ENCODE measurements at regions of chr15 and their contacts with region 1.

Region 1: GRCh38 chr15:38631126-38632075 is 66.8 kb upstream of the RASGRP1 start:
- DNase-seq: no peak
- ATAC-seq: peak; percentile 77
- H3K4me3 ChIP-seq: no peak overlapping the region
- H3K27ac ChIP-seq: no peak overlapping the region; the same call in 1 of the 2 replicates
- H3K4me1 ChIP-seq: no peaks in the 10 kb centered on the region
- H3K27me3 ChIP-seq: no peaks in the 10 kb centered on the region
- CTCF ChIP-seq: no peak
- EP300 ChIP-seq: no peak; a peak in 2 of 4 replicates
- POLR2A ChIP-seq: no peak
- RAD21 ChIP-seq: no peak

Region 2: DNA sequence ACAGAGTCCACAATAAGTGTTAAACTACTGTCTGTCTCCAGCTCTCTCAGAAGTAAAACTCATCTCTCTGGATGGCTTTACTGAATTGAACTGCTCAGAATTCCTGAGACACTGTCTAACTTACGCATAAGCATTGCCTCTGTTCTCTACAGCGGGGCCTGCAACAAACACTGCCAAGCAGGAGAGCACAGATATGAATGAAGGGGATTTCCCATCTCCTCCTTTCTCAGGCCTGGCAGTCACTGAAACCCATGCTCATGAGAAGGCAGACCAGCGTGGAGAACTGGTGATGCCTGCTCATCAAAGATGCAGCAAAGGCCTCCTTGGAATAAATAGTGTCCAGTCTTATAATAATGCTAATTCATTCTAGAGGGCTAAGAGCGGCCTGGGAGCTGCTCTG is 77.0 kb before region 1 on chr15:
- CTCF ChIA-PET with region 1: interaction called, 116 read pairs
- POLR2A ChIA-PET with region 1: interaction called, 22 read pairs
- RAD21 ChIA-PET with region 1: interaction called, 331 read pairs
- SMC1A ChIA-PET with region 1: interaction called, 194 read pairs
- in situ Hi-C with region 1: no loop called
- intact Hi-C with region 1: no loop called
- DNase-seq: no peak
- ATAC-seq: peak; percentile 80
- H3K4me3 ChIP-seq: no peak overlapping the region
- H3K27ac ChIP-seq: peak overlapping the region; percentile 59; the same call in 1 of the 2 replicates
- H3K4me1 ChIP-seq: peaks cover 45% of the 10 kb centered on the region
- H3K27me3 ChIP-seq: no peaks in the 10 kb centered on the region
- CTCF ChIP-seq: no peak
- EP300 ChIP-seq: no peak
- POLR2A ChIP-seq: no peak
- RAD21 ChIP-seq: no peak

Region 3: GRCh38 chr15:38610748-38611147 is 20.7 kb before region 1 on chr15:
- CTCF ChIA-PET with region 1: interaction called, 3 read pairs
- POLR2A ChIA-PET with region 1: interaction called, 3 read pairs
- RAD21 ChIA-PET with region 1: interaction called, 15 read pairs
- SMC1A ChIA-PET with region 1: interaction called, 1,803 read pairs
- in situ Hi-C with region 1: no loop called
- intact Hi-C with region 1: no loop called
- DNase-seq: no peak
- ATAC-seq: peak; percentile 29
- H3K4me3 ChIP-seq: no peak overlapping the region
- H3K27ac ChIP-seq: no peak overlapping the region
- H3K4me1 ChIP-seq: no peaks in the 10 kb centered on the region
- H3K27me3 ChIP-seq: no peaks in the 10 kb centered on the region
- CTCF ChIP-seq: no peak
- EP300 ChIP-seq: no peak
- POLR2A ChIP-seq: no peak
- RAD21 ChIP-seq: no peak

Region 4: DNA sequence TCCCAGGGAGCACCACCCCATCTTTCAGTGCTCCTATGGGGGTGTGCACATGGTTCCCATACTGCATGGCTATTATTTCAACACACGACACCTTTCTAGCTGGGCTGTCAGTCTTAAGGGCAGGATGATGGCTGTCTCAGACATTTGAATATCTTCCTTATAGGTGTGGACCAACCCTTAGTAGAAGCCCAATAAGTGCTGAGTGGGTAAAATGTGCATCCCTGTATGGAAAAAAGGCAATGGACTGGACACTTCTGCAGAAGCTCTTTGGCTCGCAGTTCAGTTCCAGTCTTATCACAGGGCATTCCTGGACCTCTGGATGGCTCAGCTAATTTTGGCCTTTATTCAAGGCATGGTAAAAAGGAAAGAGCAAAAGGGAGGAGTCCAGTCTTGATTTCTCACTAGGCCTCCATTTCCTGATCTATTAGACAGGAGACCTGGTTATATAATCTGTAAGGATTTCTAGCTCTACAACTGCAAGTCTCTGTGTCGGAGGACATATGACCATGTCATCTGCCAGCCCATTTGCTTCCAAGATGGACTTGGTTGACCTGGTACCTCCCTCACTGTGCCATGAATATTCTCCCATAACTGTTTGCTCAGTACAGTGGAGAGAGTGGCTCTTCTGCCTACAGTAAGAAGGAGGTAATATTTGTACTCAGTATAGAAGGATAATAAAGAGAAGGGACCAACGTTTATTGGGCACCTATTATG is 13.0 kb before region 1 on chr15:
- CTCF ChIA-PET with region 1: interaction called, 24 read pairs
- POLR2A ChIA-PET with region 1: interaction called, 30 read pairs
- RAD21 ChIA-PET with region 1: interaction called, 55 read pairs
- SMC1A ChIA-PET with region 1: interaction called, 1,803 read pairs
- in situ Hi-C with region 1: no loop called
- intact Hi-C with region 1: no loop called
- DNase-seq: no peak
- ATAC-seq: no peak
- H3K4me3 ChIP-seq: no peak overlapping the region
- H3K27ac ChIP-seq: no peak overlapping the region
- H3K4me1 ChIP-seq: no peaks in the 10 kb centered on the region
- H3K27me3 ChIP-seq: no peaks in the 10 kb centered on the region
- CTCF ChIP-seq: no peak
- EP300 ChIP-seq: no peak
- POLR2A ChIP-seq: no peak
- RAD21 ChIP-seq: no peak

Region 5: DNA sequence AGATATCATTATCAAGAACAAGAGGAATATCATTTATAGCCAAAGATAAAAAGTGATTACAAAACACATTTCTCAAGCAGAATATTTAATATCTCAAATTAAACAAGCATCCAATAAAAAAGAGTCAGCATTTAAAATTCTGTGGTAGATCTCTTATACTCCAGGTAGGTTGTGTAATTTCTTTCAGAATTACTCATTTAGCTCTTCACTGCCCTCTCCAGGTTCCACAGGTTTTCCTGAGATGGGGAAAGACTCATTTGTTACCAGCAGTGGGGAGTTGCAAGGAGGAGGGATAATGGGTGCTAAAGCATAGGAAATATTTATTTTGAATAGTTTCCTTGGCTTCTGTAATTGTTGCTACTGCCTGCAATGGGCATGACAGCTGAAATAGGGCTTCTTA is 16.3 kb after region 1 on chr15:
- CTCF ChIA-PET with region 1: interaction called, 188 read pairs
- POLR2A ChIA-PET with region 1: interaction called, 310 read pairs
- RAD21 ChIA-PET with region 1: interaction called, 737 read pairs
- SMC1A ChIA-PET with region 1: interaction called, 1,803 read pairs
- in situ Hi-C with region 1: no loop called
- intact Hi-C with region 1: no loop called
- DNase-seq: no peak
- ATAC-seq: no peak
- H3K4me3 ChIP-seq: no peak overlapping the region
- H3K27ac ChIP-seq: no peak overlapping the region
- H3K4me1 ChIP-seq: peaks cover 27% of the 10 kb centered on the region
- H3K27me3 ChIP-seq: no peaks in the 10 kb centered on the region
- CTCF ChIP-seq: peak in 2 of 3 experiments; percentile 5 to 17; a peak in 1 of 6 replicates
- EP300 ChIP-seq: no peak
- POLR2A ChIP-seq: no peak
- RAD21 ChIP-seq: peak; percentile 23; the same call in 1 of the 2 replicates

Region 6: DNA sequence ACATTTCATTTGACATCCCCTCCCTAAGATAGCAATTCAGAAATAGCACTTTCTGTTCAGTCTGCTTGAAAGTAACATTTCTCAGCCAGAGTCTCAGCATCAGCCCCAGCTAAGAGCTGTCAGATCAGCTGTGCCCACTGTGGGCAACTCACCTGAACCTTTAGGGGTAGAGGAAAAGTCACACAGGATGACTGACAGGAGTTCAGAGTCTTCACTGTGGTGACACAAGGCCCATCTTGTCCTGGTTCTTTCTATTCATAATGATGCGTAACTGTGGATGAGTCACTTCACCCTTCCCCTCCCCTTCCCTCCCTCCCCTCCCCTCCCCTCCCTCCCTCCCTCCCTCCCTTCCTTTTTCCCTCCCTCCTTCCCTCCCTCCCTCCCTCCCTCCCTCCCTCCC is 29.3 kb after region 1 on chr15:
- CTCF ChIA-PET with region 1: interaction called, 20 read pairs
- POLR2A ChIA-PET with region 1: interaction called, 310 read pairs
- RAD21 ChIA-PET with region 1: interaction called, 737 read pairs
- SMC1A ChIA-PET with region 1: interaction called, 1,803 read pairs
- in situ Hi-C with region 1: no loop called
- intact Hi-C with region 1: no loop called
- DNase-seq: no peak
- ATAC-seq: peak; percentile 67
- H3K4me3 ChIP-seq: no peak overlapping the region
- H3K27ac ChIP-seq: no peak overlapping the region
- H3K4me1 ChIP-seq: no peaks in the 10 kb centered on the region; the same call in 1 of the 2 replicates
- H3K27me3 ChIP-seq: no peaks in the 10 kb centered on the region
- CTCF ChIP-seq: no peak
- EP300 ChIP-seq: no peak
- POLR2A ChIP-seq: no peak
- RAD21 ChIP-seq: no peak

Region 7: GRCh38 chr15:38671675-38672254 is 40.4 kb after region 1 on chr15:
- CTCF ChIA-PET with region 1: interaction called, 51 read pairs
- POLR2A ChIA-PET with region 1: interaction called, 96 read pairs
- RAD21 ChIA-PET with region 1: interaction called, 416 read pairs
- SMC1A ChIA-PET with region 1: interaction called, 1,803 read pairs
- in situ Hi-C with region 1: no loop called
- intact Hi-C with region 1: loop called (anchors 2 kb)
- DNase-seq: peak; percentile 91
- ATAC-seq: peak; percentile 76
- H3K4me3 ChIP-seq: no peak overlapping the region
- H3K27ac ChIP-seq: peak overlapping the region; percentile 77
- H3K4me1 ChIP-seq: peaks cover 56% of the 10 kb centered on the region
- H3K27me3 ChIP-seq: no peaks in the 10 kb centered on the region
- CTCF ChIP-seq: no peak
- EP300 ChIP-seq: peak in 1 of 2 experiments; percentile 7; a peak in 2 of 4 replicates
- POLR2A ChIP-seq: peak; percentile 61
- RAD21 ChIP-seq: no peak; the same call in 1 of the 2 replicates